Right ventricle myocardium superior (tissue), 1 donor: ENCODE measurements at regions of chr1 and their contacts with region 1.

Region 1: GRCh38 chr1:32361674-32362473 is 411 bp downstream of the FAM229A start:
- DNase-seq: peak; percentile 77
- ATAC-seq: peak; percentile 82

Region 2: GRCh38 chr1:32335790-32336590 is 25.9 kb before region 1 on chr1 and contains the start of gene MARCKSL1:
- intact Hi-C with region 1: loop called (anchors 2 kb)
- DNase-seq: peak; percentile 93
- ATAC-seq: peak; percentile 73
- total RNA-seq, gene MARCKSL1: 16.1 TPM